H1 (cell line): ENCODE measurements at regions of chr3 and their contacts with region 1.

Region 1: DNA sequence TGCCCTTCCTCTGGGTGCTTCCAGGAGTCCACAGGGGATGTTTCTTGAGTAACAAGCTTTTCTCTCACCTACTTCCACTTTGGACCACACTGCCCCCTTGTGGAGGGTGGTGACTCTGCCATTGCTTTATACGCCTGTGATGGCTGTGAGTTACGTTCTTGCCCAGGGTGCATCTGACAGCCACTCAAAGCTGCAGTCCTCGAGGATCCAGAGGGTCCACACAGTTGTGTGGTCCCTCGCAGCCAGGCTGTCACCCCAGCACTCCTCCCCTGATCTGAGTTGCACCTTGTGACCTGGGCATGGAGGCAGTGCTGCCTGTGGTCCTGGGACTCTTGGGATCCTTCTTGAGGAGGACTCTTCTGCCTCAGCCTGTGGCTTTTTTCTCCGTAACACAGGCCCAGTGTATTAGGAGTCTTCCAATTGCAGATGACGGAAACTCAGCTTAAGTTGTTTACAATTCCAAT is 23.4 kb downstream of the FOXL2 start:
- DNase-seq: peak in 1 of 2 experiments; percentile 96
- H3K4me3 ChIP-seq: no peak overlapping the region
- H3K27ac ChIP-seq: no peak overlapping the region
- H3K4me1 ChIP-seq: no peaks in the 10 kb centered on the region; a peak in 1 of 7 replicates
- H3K27me3 ChIP-seq: no peaks in the 10 kb centered on the region; a peak in 1 of 7 replicates
- CTCF ChIP-seq: peak; percentile 82 to 96 (median 86)
- EP300 ChIP-seq: no peak
- POLR2A ChIP-seq: no peak
- RAD21 ChIP-seq: peak; percentile 90 to 91

Region 2: GRCh38 chr3:138417559-138417982 is 506.0 kb before region 1 on chr3:
- CTCF ChIA-PET with region 1: interaction called, 10 read pairs
- POLR2A ChIA-PET with region 1: no interaction called
- DNase-seq: peak; percentile 79 to 93
- H3K4me3 ChIP-seq: no peak overlapping the region
- H3K27ac ChIP-seq: no peak overlapping the region
- H3K4me1 ChIP-seq: peaks cover 0 to 3% (median 1%) of the 10 kb centered on the region in 4 experiments; a peak in 4 of 7 replicates
- H3K27me3 ChIP-seq: no peaks in the 10 kb centered on the region
- CTCF ChIP-seq: peak; percentile 97 to 99 (median 99)
- EP300 ChIP-seq: no peak
- POLR2A ChIP-seq: no peak
- RAD21 ChIP-seq: peak; percentile 88 to 90

Region 3: DNA sequence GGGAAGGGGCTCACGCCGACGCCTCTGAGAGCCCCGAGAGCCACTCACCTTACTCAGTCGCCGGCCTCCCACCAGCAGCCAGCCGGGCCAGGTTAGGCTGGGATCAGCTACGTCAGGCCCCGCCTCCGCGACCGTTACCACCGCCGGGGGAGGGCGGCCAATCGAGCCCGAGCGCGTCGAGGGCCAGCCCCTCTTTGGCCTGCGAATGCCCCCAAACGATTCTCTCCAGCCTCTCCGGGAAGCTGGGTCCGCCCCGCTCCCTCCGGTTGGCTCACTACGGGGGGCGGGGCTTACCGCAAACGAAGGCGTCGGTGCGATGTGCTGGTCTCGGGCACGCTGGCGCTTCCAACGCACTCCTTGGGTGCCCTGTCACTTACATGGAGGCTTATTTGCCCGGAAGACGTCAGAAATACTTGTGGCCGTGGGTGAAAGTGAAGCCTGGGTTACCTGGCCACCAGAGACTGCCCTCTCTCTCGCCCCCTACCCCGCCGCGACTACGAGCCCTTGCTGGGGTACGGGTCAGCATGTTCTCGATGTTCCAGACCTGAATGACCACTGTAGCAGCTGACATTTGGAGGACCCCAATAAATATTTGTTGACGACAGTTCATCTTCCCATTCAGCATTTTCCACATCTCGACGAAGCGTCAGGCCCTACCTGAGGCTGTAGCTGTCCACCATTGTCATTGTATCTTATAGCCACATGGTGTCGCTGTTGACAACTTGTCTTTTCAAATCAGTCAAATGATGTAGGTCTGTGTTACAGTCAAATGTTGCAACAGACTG is 329.2 kb before region 1 on chr3 and contains the start of gene CEP70:
- CTCF ChIA-PET with region 1: interaction called, 80 read pairs
- POLR2A ChIA-PET with region 1: no interaction called
- DNase-seq: peak; percentile 85 to 96
- H3K4me3 ChIP-seq: peak within 1 kb of the TSS; percentile 70 to 82 (median 78)
- H3K27ac ChIP-seq: peak within 1 kb of the TSS; percentile 54; the same call in 1 of the 2 replicates
- H3K4me1 ChIP-seq: peaks cover 0 to 5% (median 3%) of the 10 kb centered on the region in 4 experiments; a peak in 3 of 7 replicates
- H3K27me3 ChIP-seq: no peaks in the 10 kb centered on the region
- CTCF ChIP-seq: peak; percentile 39 to 92 (median 65)
- EP300 ChIP-seq: no peak
- POLR2A ChIP-seq: peak; percentile 54 to 84
- RAD21 ChIP-seq: peak; percentile 84 to 87
- total RNA-seq, gene CEP70: 23.6 and 26.2 TPM in 2 replicates

Region 4: DNA sequence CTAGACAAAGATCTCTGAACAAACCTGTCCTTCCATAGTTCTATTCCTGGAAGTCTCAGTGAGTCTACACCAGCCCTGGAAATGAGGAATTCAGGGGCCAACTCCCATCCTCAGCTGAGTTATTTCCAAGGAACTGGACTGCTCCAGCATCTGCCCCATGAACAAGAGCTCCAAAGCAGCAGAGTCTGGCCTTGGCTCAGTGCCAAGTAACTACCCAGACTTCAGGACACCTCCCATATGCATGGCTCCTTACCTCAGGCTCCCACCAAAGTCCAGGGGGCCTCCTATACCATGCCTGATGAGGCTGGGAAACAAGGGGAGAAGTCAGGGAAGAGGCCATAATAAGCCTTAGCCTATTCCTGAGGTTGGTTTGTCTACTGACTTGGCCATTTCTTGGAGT is 270.0 kb before region 1 on chr3:
- CTCF ChIA-PET with region 1: interaction called, 10 read pairs
- POLR2A ChIA-PET with region 1: no interaction called
- DNase-seq: no peak
- H3K4me3 ChIP-seq: no peak overlapping the region
- H3K27ac ChIP-seq: no peak overlapping the region
- H3K4me1 ChIP-seq: no peaks in the 10 kb centered on the region
- H3K27me3 ChIP-seq: no peaks in the 10 kb centered on the region
- CTCF ChIP-seq: no peak
- EP300 ChIP-seq: no peak
- POLR2A ChIP-seq: no peak
- RAD21 ChIP-seq: no peak

Region 5: GRCh38 chr3:138768125-138768524 is 155.4 kb before region 1 on chr3:
- CTCF ChIA-PET with region 1: interaction called, 10 read pairs
- POLR2A ChIA-PET with region 1: no interaction called
- DNase-seq: peak in 1 of 2 experiments; percentile 42
- H3K4me3 ChIP-seq: no peak overlapping the region
- H3K27ac ChIP-seq: no peak overlapping the region
- H3K4me1 ChIP-seq: no peaks in the 10 kb centered on the region
- H3K27me3 ChIP-seq: no peaks in the 10 kb centered on the region
- CTCF ChIP-seq: no peak
- EP300 ChIP-seq: no peak
- POLR2A ChIP-seq: no peak
- RAD21 ChIP-seq: no peak

Region 6: GRCh38 chr3:138875754-138876664 is 47.6 kb before region 1 on chr3:
- CTCF ChIA-PET with region 1: no interaction called
- POLR2A ChIA-PET with region 1: no interaction called
- DNase-seq: no peak
- H3K4me3 ChIP-seq: no peak overlapping the region
- H3K27ac ChIP-seq: no peak overlapping the region
- H3K4me1 ChIP-seq: peaks cover 0 to 4% (median 0%) of the 10 kb centered on the region in 4 experiments; a peak in 1 of 7 replicates
- H3K27me3 ChIP-seq: no peaks in the 10 kb centered on the region
- CTCF ChIP-seq: no peak
- EP300 ChIP-seq: no peak
- POLR2A ChIP-seq: no peak
- RAD21 ChIP-seq: no peak

Region 7: DNA sequence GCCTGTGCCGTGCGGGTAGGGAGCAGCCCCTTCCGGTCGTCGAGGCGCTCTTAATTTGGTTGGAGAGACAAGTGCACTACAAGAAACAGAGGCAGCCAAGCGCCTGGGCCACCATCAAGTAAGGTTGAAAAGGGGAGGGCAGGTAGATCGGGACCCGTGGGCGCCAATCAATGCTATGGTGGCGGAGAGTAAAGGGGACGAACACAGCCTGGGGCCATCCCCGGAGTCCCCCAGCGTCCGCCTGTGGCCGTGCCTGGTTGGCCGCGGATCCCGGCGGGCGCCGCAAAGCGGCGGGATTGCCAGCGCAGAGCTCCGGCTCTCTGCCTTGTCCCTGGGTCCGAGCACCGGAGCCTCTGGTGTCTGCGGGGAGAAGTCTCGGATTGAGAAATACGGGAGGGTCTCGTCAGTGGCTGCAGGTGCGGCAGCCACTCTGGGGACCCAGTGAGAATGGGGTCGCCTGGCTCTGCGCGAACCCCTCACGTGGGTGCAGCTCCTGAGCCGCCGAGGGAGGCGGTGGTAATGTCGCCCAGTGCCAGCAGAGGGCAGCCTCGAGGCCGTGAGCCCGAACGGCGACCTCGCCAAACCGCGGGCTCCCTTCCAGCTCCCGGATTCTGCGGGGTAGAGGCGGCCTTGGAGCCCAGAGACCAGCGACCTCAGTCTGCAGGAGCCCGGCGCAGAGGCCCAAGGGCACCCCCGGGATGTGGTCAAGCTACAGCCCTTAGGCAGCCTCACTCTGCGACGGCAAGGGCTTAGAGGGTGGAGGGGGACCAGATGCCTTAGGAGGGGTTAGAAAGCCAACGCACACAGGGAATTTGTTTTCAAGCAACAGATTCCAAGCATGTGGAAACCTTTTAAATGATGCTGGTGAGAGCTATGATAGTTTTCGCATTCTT is 12.5 kb after region 1 on chr3:
- CTCF ChIA-PET with region 1: interaction called, 180 read pairs
- POLR2A ChIA-PET with region 1: interaction called, 3 read pairs
- DNase-seq: peak in 1 of 2 experiments; percentile 99
- H3K4me3 ChIP-seq: peak overlapping the region; percentile 11 to 59 (median 39); a peak in 7 of 8 replicates
- H3K27ac ChIP-seq: no peak overlapping the region
- H3K4me1 ChIP-seq: peaks cover 9 to 28% (median 19%) of the 10 kb centered on the region in 4 experiments
- H3K27me3 ChIP-seq: peaks cover 46 to 69% (median 59%) of the 10 kb centered on the region in 4 experiments
- CTCF ChIP-seq: peak in 2 of 3 experiments; percentile 84 to 86; a peak in 3 of 4 replicates
- EP300 ChIP-seq: no peak
- POLR2A ChIP-seq: no peak; a peak in 1 of 3 replicates
- RAD21 ChIP-seq: peak; percentile 32 to 63; a peak in 3 of 4 replicates

Region 8: DNA sequence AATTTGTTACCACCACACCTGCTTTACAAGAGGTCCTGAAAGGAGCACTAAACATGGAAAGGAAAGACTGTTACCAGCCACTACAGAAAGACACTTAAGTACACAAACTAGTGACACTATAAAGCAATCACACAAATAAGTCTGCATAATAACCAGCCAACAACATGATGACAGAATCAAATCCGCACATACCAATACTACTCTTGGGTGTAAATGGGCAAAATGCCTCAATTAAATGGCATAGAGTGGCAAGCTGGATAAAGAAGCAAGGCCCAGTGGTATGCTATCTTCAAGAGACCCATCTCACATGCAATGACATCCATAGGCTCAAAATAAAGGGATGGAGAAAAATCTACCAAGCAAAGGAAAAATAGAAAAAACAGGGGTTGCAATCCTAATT is 228.0 kb after region 1 on chr3:
- CTCF ChIA-PET with region 1: no interaction called
- POLR2A ChIA-PET with region 1: no interaction called
- DNase-seq: no peak
- H3K4me3 ChIP-seq: no peak overlapping the region
- H3K27ac ChIP-seq: no peak overlapping the region
- H3K4me1 ChIP-seq: no peaks in the 10 kb centered on the region
- H3K27me3 ChIP-seq: no peaks in the 10 kb centered on the region
- CTCF ChIP-seq: no peak
- EP300 ChIP-seq: no peak
- POLR2A ChIP-seq: no peak
- RAD21 ChIP-seq: no peak